Adrenal gland (tissue), 19 donors: ENCODE measurements at regions of chr6 and their contacts with region 1.

Region 1: DNA sequence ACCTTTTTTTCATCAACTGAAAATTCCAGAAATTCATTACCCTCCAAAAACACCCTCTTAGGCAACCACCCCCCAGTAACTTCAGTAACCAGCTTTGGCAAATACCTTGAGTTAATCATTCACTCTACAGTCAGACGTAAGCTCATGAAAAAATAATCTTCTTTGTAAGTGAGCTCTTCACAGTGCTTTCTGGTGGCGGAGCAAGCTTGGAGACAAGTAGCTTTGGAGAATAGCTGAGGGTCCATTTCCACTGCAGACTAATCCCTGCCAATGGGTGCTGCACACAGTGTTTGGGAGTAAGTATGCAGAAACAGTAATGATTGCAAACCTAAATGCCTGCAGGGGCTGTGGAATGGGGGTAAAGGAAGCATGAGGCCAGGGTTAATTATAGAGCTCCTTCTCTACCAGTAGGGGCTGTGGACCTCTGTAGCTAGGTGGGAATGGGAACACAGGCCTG is 56.8 kb upstream of the HINT3 start:
- DNase-seq: no peak
- H3K4me3 ChIP-seq: no peak overlapping the region
- H3K27ac ChIP-seq: no peak overlapping the region
- H3K4me1 ChIP-seq: peaks cover 4% of the 10 kb centered on the region in 2 donors
- H3K27me3 ChIP-seq: no peaks in the 10 kb centered on the region
- CTCF ChIP-seq: no peak
- POLR2A ChIP-seq: no peak

Region 2: DNA sequence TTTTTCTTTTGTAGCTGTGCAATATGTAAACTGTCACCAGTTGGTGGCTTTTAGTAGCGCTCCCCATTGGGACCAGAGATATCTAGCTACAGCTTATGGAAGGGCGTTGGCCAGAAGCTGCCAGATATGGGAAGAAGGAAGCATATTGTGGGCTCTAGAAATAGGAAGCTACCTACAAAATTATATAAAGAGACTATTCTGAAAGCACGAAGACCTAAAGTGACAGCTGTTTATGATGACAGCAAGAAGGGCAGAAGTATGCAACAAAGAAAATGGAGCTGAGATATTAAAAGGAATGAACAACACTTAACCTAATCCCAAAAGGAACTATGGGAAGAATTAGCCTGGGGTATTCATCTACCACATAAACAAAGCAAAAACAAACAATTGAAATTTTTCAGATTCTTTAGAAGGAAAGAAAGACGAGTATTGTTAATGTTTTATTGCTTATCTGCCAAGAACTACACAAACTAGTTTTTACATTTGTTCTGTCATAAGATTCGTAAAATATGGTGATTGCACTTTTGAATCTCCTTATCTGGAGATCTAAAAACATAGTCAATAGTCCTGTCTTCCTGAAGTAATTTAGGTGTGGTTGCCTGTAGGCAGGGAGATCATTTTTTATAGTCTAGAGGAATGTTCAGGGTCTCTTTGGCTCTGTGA is 27.4 kb before region 1 on chr6:
- intact Hi-C with region 1: loop called in 1 of 2 experiments (anchors 2 kb)
- DNase-seq: no peak
- H3K4me3 ChIP-seq: no peak overlapping the region
- H3K27ac ChIP-seq: peak overlapping the region in 1 of 5 donors; percentile 14
- H3K4me1 ChIP-seq: peaks cover 5 to 26% of the 10 kb centered on the region in 2 donors
- H3K27me3 ChIP-seq: no peaks in the 10 kb centered on the region
- CTCF ChIP-seq: no peak
- POLR2A ChIP-seq: no peak

Region 3: GRCh38 chr6:126112144-126112632 is 212.4 kb after region 1 on chr6:
- intact Hi-C with region 1: no loop called
- DNase-seq: no peak
- H3K4me3 ChIP-seq: no peak overlapping the region
- H3K27ac ChIP-seq: no peak overlapping the region
- H3K4me1 ChIP-seq: no peaks in the 10 kb centered on the region
- H3K27me3 ChIP-seq: no peaks in the 10 kb centered on the region
- CTCF ChIP-seq: no peak
- POLR2A ChIP-seq: no peak